CD4-positive, alpha-beta memory T cell (primary cell): ENCODE measurements at regions of chr12 and their contacts with region 1.

Region 1: DNA sequence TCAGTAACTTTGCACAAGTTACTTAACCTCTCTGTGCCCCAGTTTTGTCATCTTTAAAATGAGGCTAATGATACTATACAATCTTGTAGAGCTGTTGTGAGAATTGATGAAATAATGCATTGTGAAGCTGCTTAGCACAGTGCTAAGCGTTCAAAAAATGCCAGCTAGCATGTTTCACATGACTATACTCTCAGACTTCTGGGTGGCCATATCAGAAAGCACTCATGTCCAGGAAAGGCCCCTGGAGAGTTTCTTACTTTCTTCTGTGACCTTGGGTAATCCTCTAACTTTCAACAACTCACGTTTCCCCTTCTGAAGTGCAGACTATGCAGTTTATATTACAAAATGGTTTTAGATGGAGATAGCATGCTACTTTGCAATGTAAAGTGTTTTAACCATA is 68.1 kb downstream of the TPH2 start:
- DNase-seq: no peak
- H3K4me3 ChIP-seq: no peak overlapping the region
- H3K4me3 Mint-ChIP-seq: no peak overlapping the region
- H3K27ac ChIP-seq: no peak overlapping the region
- H3K27ac Mint-ChIP-seq: no peak overlapping the region
- H3K4me1 ChIP-seq: no peaks in the 10 kb centered on the region
- H3K4me1 Mint-ChIP-seq: no peaks in the 10 kb centered on the region
- H3K27me3 ChIP-seq: no peaks in the 10 kb centered on the region
- H3K27me3 Mint-ChIP-seq: peaks cover 12 to 18% of the 10 kb centered on the region in 2 donors

Region 2: DNA sequence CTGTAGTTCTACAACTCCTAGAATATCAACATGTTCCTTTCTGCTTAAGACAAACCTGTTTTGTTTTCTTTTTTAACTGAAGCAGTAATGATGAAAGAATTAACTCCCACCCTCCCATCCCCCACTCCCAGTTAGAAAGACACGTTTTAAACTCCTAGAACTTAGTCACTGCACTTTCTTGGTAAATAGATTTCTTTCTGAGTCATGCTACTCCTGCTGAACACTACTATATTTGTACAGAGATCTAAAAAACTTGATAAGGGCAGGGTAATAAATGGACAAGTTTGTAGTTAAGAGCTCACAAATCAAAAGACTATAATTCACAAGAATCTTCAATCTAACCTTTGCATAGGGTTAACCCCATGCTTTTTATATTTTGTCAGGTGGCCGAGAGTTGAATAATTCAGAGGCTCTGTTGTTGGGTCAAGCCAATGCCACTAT is 1250.6 kb before region 1 on chr12:
- CTCF ChIA-PET with region 1: no interaction called
- POLR2A ChIA-PET with region 1: no interaction called
- intact Hi-C with region 1: no loop called
- DNase-seq: no peak
- H3K4me3 ChIP-seq: no peak overlapping the region
- H3K4me3 Mint-ChIP-seq: no peak overlapping the region
- H3K27ac ChIP-seq: no peak overlapping the region
- H3K27ac Mint-ChIP-seq: no peak overlapping the region
- H3K4me1 ChIP-seq: no peaks in the 10 kb centered on the region
- H3K4me1 Mint-ChIP-seq: no peaks in the 10 kb centered on the region
- H3K27me3 ChIP-seq: no peaks in the 10 kb centered on the region
- H3K27me3 Mint-ChIP-seq: peaks cover 6 to 9% of the 10 kb centered on the region in 2 donors

Region 3: GRCh38 chr12:72017054-72017651 is 10.4 kb after region 1 on chr12:
- CTCF ChIA-PET with region 1: interaction called, 11 read pairs
- POLR2A ChIA-PET with region 1: no interaction called
- intact Hi-C with region 1: no loop called
- DNase-seq: peak; percentile 38 to 55 (median 45)
- H3K4me3 ChIP-seq: no peak overlapping the region
- H3K4me3 Mint-ChIP-seq: no peak overlapping the region
- H3K27ac ChIP-seq: no peak overlapping the region
- H3K27ac Mint-ChIP-seq: no peak overlapping the region
- H3K4me1 ChIP-seq: no peaks in the 10 kb centered on the region
- H3K4me1 Mint-ChIP-seq: peaks cover 0 to 1% (median 0%) of the 10 kb centered on the region in 4 donors
- H3K27me3 ChIP-seq: peaks cover 3% of the 10 kb centered on the region
- H3K27me3 Mint-ChIP-seq: peaks cover 5 to 14% of the 10 kb centered on the region in 2 donors